ENCODE measurements at regions of chr17 and their contacts with region 1.

Region 1: DNA sequence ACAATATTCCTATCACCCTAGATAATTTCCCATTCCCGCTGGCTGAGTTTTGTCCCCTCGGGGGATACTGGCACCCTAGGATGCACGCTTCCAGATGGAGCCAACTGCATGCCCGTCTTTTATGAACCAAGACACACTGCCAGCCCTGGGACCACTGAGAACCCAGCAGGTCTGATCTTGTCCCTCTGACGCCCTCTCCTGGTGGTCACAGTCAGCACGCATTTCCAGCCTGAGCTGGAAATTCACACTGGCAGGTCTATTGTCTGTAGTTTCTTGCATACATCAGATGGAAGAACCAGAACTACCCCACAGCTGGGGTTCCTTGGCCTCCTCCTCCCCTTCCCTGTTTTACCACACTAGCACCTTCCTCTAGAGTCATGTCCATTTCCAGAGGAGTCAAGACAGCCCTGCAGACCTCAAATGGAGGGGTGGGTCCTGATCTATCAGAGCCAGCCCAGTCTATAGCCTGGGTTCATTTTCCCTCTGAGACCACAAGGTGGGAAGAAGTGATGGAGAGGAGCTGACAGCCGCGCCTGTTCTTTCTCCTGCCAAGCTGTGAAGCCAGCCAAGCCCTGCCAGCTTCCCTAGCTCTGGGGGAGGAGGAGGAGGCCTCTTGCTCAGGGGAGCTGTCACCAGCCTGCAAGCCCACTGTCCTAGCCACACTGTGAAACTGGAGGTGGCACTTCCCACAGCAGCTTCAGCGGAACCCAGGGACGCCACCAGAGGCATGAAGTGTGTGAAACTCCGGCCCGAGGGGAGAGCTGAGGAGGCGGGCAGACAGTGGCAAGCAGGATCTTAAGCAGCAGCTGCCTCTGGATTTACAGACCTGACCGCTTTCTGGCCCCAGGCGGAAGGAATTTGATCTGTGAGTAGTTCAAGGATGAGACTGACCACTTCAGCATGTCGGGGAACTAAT is 29.3 kb downstream of the MXRA7 start:
- DNase-seq: no peak
- H3K4me3 ChIP-seq: no peak overlapping the region
- CTCF ChIP-seq: peak; percentile 76

Region 2: DNA sequence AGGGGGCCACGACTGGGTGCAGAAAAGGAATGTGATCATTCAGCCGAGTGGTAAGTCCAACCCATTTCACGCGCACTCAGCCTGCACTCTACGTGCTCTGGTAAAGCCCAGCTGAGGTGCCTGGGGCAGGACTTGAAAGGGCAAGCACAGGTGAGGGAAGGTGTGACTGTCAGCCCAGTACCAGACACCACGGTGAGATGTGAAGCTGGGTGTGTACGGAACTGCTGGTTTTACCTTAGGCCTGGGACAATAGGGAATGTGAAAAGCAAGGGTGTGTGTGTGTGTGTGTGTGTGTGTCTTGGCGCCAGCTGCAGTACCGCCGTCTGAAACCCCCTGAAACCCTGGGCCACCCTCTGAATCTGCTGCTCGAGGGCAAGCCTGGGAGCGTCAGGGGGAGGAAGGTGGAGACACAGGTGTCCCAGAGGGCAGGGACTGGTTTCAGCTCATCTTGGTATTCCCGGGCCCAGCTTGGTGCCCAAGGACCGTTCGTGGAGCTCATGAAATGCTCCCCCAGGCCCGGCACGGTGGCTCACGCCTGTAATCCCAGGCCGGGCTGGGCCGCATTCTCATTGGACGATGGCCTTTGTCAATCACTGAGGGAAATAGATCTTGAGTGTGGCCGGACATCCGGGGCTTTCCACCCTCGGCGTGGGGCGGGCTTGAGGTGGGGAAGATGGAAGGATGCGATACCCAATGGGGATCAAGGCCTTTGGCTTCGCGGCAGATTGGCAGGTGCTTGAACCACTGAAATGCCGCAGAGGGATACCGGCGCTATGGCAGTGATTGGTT is 10.2 kb before region 1 on chr17:
- CTCF ChIA-PET with region 1: interaction called, 25 read pairs
- POLR2A ChIA-PET with region 1: interaction called, 6 read pairs
- DNase-seq: peak; percentile 100
- H3K4me3 ChIP-seq: peak overlapping the region; percentile 74
- CTCF ChIP-seq: no peak

Region 3: DNA sequence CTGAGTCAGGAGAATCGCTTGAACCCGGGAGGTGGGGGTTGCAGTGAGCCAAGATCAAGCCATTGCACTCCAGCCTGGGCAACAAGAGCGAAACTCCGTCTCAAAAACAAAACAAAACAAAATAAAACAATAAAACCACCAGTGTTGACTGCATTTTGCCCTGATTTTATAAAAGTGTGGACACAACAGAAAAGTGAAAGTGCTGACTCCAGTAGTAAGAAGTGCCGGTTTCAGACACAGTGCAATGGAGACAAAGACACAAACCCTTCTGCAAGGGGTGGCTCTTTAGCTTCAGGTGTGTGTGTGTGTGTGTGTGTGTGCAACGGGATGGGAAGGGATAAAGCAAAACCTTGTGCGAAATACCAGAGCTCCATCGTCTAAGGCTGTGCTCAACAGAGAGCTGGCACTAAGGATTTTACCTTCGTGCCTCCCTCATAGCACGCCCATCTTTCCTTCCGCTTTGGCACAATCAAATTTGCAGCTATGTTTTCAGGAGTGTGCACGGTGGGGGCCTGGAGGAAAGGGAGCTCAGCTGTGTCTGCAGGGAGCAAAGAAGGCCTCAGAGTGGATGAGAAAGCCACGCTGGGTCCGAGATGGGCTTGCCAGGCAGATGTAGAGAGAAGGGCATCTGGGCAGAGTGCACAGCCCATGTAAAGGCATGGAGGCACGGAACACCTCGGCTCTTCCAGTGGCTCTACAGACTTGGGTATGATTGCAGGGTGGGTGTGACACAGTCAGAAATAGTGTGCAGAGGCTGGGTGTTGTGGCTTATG is 13.8 kb after region 1 on chr17:
- CTCF ChIA-PET with region 1: interaction called, 18 read pairs
- POLR2A ChIA-PET with region 1: no interaction called
- DNase-seq: no peak
- H3K4me3 ChIP-seq: no peak overlapping the region
- CTCF ChIP-seq: no peak

Region 4: GRCh38 chr17:76700617-76701470 is 19.4 kb after region 1 on chr17:
- CTCF ChIA-PET with region 1: interaction called, 12 read pairs
- POLR2A ChIA-PET with region 1: no interaction called
- DNase-seq: peak; percentile 56
- H3K4me3 ChIP-seq: peak overlapping the region; percentile 46
- CTCF ChIP-seq: no peak

Region 5: DNA sequence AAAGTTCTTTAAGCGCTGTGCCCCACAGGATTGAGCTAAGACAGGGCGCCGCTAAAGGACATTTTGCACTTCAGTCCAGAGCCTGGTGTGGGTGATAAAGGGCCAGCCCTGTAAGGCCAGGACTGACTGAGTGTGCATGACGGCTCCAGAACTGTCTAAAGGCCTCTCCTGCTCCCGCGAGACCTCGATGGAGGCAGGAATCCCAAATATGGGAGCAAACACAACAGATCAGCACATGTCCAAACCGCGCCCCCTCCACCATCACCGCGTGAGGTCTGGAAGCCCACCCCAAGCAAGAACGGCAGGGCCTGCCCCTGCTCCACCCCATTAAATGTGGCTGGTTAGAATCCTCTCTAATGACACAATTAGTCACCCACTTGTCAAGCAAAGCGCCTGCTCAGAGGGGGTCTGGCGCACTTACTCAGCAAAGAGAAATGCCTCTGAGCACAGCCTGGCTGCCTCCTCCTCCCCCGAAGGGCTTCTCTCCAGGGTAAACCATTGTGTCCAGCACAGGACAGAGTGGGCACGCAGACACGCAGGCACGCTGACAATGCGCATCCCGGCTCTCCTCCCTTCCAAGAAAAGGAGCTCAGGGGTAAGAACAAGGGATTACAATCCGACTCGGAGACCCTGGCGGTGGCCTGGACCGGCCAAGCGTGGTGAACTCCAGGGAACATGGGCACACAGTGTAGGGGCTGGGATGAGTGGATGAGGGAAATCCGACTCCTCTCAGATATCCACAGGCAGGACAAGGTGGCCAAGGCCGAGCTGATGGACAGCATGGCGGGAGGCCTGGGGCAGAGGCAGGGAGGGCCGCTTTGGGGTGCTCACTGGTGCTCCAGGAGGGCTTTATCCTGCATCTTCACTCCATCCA is 27.8 kb after region 1 on chr17:
- CTCF ChIA-PET with region 1: interaction called, 20 read pairs
- POLR2A ChIA-PET with region 1: interaction called, 3 read pairs
- DNase-seq: peak; percentile 98
- H3K4me3 ChIP-seq: peak overlapping the region; percentile 92
- CTCF ChIP-seq: no peak